RWPE1 (cell line): ENCODE measurements at regions of chr19 and their contacts with region 1.

Region 1: GRCh38 chr19:38899447-38900219 is at the starts of genes NFKBIB and SIRT2:
- DNase-seq: peak; percentile 99
- H3K27ac ChIP-seq: peak within 1 kb of the TSS; percentile 72
- CTCF ChIP-seq: no peak

Region 2: DNA sequence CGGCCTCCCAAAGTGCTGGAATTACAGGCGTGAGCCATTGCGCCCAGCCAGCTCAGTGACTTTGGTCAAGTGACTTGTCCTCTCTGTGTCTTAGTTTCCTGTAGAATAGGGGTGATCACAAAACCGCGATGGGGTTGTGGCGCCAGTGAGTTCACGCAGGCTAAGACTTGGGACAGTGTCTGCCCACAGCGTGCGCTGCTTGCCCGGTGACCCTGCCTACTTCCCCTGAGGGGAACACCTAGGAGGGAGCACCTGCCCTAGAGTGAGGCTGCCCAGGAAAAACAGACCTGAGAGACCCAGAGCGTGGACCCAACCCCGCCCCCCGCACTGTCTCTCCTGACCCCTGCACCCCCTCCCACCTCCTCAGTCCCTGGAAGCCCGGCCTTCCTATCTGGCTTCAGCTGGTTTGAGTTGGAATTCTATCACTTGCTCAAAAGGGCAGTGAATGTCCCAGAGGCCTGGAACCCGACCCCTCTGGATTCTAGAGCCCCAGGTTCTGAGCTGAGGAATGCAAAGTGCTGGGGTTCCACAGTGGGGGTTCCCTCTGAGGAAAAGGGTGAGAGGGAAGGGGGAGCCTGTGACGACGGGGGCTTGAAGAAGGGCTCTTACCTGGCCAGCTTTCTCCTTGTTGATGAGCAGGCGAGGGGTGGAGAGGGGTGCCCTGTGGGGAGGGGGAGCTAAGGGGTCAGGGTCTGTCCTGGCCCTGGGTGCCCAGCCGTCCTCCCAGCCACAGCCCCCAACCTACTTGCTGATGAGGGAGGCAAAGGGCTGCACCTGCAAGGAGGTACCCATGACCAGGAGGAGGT is 19.4 kb before region 1 on chr19:
- CTCF ChIA-PET with region 1: interaction called, 11 read pairs
- POLR2A ChIA-PET with region 1: no interaction called
- DNase-seq: no peak
- H3K27ac ChIP-seq: no peak overlapping the region
- CTCF ChIP-seq: no peak